Activated CD4-positive, alpha-beta T cell treated with anti-CD3 and anti-CD28 coated beads for 36 hours (primary cell): ENCODE measurements at regions of chr4 and their contacts with region 1.

Region 1: DNA sequence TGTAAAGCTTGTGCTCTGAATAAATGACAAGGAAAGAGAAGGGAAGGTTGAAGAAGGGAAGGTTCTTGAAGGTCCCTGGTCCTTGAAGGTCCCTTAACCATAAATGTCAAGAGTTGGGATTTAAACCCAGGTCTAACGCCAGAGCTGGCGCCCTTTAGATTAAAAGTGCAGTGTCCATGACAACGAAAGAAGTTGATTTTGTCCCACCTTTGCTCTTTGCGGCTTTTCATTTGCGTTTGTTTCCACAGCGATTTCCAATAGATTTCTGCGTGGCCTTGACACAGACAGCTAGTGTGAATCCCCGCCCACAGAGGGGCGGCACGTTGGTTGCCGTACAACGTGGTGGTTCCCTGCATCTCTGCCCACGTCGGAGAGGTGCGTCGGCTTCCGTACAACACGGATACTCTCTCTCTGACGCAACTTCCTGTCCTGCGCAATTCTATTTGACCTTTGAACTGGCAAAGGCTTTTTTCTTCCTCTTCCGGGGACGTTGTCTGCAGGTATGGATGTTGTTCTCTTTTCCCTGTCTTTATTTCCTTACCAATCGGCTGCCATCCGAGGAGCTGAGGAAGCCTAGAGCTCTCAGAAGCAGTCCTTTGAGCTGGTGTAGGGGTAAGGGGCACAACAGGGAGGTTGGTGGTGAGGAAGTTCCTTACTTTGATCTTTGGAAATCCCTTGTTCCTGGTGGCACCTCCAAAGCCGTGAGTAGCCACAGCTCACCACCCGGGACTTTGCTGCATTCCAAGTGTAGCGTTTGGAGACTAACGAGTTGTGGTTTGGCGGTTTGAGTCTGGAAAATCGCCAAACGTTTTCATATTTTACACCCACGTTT is at the start of gene RPL34:
- DNase-seq: peak; percentile 98
- ATAC-seq: peak; percentile 91
- H3K4me3 Mint-ChIP-seq: peak within 1 kb of the TSS; percentile 90
- H3K27ac Mint-ChIP-seq: peak within 1 kb of the TSS; percentile 98
- H3K4me1 Mint-ChIP-seq: peaks cover 47% of the 10 kb centered on the region
- H3K27me3 Mint-ChIP-seq: no peaks in the 10 kb centered on the region
- total RNA-seq, gene RPL34: 1,121 to 1,847 TPM

Region 2: GRCh38 chr4:107989537-107990386 is 630.6 kb before region 1 on chr4 and contains the start of gene HADH:
- CTCF ChIA-PET with region 1: no interaction called
- POLR2A ChIA-PET with region 1: no interaction called
- intact Hi-C with region 1: loop called (anchors 1 kb)
- DNase-seq: peak; percentile 97
- ATAC-seq: peak; percentile 98
- H3K4me3 Mint-ChIP-seq: peak within 1 kb of the TSS; percentile 95
- H3K27ac Mint-ChIP-seq: peak within 1 kb of the TSS; percentile 96
- H3K4me1 Mint-ChIP-seq: peaks cover 54% of the 10 kb centered on the region
- H3K27me3 Mint-ChIP-seq: no peaks in the 10 kb centered on the region
- total RNA-seq, gene HADH: 58.4 to 60.8 TPM

Region 3: GRCh38 chr4:108036213-108036612 is 584.1 kb before region 1 on chr4:
- CTCF ChIA-PET with region 1: no interaction called
- POLR2A ChIA-PET with region 1: no interaction called
- intact Hi-C with region 1: loop called (anchors 2 to 5 kb)
- DNase-seq: peak; percentile 86
- ATAC-seq: peak; percentile 74
- H3K4me3 Mint-ChIP-seq: peak overlapping the region; percentile 59
- H3K27ac Mint-ChIP-seq: peak overlapping the region; percentile 94
- H3K4me1 Mint-ChIP-seq: peaks cover 65% of the 10 kb centered on the region
- H3K27me3 Mint-ChIP-seq: no peaks in the 10 kb centered on the region

Region 4: DNA sequence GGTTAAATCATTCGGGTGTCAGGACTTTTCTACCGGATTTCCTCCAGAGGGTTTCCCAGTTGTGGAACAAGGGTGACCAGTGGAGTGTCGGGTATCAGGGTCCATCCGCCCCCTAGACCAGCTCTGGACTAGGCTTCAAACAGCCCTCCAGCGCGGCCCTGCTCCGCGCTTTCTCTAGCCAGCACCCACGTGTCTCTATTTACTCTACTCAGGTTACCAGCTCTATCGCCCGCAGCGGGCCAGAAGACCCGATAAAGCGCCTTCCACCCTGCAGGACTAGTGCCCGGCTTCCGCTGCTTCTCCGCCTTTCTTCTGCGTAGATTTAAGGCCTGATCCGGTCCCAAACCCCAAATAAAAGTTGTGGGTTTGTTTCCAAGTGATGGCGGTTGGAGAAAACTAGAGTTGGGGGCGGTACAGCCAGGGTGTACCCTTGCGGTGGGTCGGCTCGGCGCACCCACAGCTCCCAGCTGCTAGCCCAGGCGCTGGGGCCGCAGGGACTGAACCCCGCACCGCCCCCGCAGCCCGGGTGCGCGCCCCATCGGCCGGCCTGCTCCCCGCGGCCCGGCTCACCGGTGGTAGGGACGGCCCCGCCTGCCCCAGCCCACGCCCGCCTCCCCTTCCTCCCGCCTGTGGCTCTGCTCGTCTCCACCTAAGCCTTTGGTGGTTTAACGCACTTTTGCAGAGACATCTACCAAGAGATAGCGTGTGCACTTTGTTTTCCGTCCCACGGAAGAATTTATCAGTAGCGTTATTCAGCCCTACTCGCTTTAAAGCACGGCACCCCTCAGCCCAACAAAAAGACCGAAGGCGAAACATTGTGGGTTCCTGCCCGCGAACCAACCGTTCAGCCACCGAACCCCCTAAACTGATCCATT is 453.6 kb before region 1 on chr4:
- CTCF ChIA-PET with region 1: no interaction called
- POLR2A ChIA-PET with region 1: no interaction called
- intact Hi-C with region 1: loop called (anchors 2 to 5 kb)
- DNase-seq: peak; percentile 86
- ATAC-seq: peak; percentile 35
- H3K4me3 Mint-ChIP-seq: peak overlapping the region; percentile 85
- H3K27ac Mint-ChIP-seq: peak overlapping the region; percentile 96
- H3K4me1 Mint-ChIP-seq: peaks cover 39% of the 10 kb centered on the region
- H3K27me3 Mint-ChIP-seq: peaks cover 12% of the 10 kb centered on the region

Region 5: DNA sequence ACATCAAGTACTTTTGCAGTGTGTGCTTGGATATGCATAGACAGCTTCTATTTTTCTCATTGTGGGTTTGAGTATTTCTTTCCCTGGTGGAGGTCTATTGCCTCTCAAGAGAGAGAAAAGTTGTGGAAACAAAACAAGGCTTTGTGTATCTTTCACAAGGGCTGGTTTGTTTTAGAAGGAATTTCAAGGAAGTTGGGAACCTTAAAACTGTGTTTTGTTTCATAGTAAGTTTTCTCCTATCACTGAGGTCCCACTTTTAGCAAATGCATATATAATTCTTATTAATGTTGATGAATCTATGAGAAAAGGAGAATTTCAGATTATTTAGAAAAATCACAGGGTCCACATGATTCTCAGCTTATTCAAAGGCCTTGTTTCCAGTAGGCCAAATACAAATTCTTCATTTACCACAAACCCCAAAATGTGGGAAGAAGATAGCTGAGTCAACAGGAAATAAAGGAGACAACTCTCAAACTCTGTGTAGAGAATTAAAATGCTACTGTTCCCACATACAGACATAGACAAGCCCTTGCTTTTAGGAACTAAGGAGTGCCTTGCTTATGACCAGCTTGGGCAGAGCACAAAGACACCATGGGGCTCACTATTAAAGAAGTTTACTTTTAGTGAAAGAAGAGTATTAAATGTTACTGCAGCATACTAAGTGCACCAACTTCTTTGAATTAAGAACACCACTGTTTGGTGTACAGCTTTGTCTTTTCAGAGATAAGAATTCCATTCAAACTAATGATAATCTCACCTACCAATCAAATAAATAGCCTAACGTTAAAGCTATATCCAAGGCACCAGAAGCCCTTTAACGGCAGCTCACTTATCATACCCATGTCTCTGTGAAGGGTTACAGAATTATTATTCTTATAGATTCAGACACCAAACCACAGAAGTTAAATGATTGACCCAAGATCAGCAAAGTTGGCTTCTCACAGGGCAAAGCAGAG is 274.2 kb before region 1 on chr4:
- CTCF ChIA-PET with region 1: no interaction called
- POLR2A ChIA-PET with region 1: no interaction called
- intact Hi-C with region 1: no loop called
- DNase-seq: no peak
- ATAC-seq: no peak
- H3K4me3 Mint-ChIP-seq: no peak overlapping the region
- H3K27ac Mint-ChIP-seq: no peak overlapping the region
- H3K4me1 Mint-ChIP-seq: peaks cover 36% of the 10 kb centered on the region
- H3K27me3 Mint-ChIP-seq: no peaks in the 10 kb centered on the region

Region 6: DNA sequence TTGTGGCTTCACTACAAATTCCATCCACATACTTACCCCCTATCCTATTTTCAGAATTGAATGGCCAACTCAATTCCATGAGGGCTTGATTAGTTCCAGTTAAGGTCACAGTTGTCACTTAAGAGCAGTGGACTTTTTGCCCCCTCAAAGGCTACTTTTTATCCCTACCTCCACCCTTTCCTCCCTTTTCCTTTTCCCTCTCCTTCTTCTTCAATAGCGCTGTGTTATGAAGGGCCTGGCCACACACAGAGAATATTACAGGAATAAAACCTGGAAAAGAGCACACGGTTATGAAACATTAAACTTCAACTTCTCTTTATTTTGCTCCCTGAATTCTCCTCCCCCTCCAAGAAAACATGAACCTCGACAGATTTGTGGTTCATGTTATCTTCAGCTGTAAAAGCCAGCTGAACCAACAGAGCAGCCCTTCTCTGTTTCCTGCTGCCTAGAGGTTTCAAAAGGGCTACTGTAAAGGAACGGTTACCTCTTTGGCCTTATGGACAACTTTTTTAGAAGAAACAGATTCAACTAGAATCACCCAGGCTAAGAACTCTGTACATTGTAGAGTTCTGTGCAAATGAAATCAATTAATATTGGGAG is 87.0 kb before region 1 on chr4:
- CTCF ChIA-PET with region 1: no interaction called
- POLR2A ChIA-PET with region 1: no interaction called
- intact Hi-C with region 1: loop called in 1 of 2 experiments (anchors 5 kb)
- DNase-seq: no peak
- ATAC-seq: no peak
- H3K4me3 Mint-ChIP-seq: no peak overlapping the region
- H3K27ac Mint-ChIP-seq: peak overlapping the region; percentile 9
- H3K4me1 Mint-ChIP-seq: peaks cover 73% of the 10 kb centered on the region
- H3K27me3 Mint-ChIP-seq: no peaks in the 10 kb centered on the region

Region 7: DNA sequence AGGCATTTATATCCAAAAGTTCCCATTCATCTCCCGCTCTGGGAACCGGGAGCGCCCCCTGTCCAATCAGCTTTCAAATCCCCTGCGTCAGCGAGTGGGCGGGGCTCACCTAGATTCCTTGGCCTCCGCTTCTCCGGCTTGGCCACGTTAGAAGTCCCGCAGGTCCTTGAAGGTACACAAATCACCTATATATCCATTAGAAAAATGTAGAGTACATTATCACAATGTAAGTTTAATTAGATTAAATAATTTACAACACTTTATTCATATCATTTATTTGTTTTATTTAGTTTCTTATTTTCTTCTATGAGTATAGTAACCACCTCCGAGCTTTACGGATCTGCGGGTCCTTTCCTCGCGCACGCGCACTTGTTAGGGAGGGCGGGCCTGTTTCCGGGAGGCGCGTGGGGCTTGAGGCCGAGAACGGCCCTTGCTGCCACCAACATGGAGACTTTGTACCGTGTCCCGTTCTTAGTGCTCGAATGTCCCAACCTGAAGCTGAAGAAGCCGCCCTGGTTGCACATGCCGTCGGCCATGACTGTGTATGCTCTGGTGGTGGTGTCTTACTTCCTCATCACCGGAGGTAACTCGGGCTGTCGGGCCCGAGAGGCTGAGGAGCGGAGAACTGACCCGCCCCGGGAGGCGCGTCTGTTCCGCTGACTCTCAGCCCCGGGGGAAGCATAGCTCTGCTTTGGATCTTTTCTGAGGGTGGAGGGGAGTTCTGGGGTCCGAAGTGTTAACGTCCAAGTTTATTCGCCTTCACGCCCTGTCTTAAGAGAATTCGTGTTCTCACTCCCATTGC is 30.1 kb after region 1 on chr4 and contains the start of gene OSTC:
- CTCF ChIA-PET with region 1: interaction called, 3 read pairs
- POLR2A ChIA-PET with region 1: interaction called, 7 read pairs
- intact Hi-C with region 1: loop called (anchors 1 kb)
- DNase-seq: peak; percentile 95
- ATAC-seq: peak; percentile 96
- H3K4me3 Mint-ChIP-seq: peak within 1 kb of the TSS; percentile 98
- H3K27ac Mint-ChIP-seq: peak within 1 kb of the TSS; percentile 93
- H3K4me1 Mint-ChIP-seq: peaks cover 32% of the 10 kb centered on the region
- H3K27me3 Mint-ChIP-seq: no peaks in the 10 kb centered on the region
- total RNA-seq, gene OSTC: 50.5 to 78.5 TPM